Colonic mucosa (tissue), 4 donors: ENCODE measurements at regions of chr17 and their contacts with region 1.

Region 1: GRCh38 chr17:1730328-1731193 is 6.1 kb downstream of the WDR81 start:
- DNase-seq: peak; percentile 52
- H3K4me3 ChIP-seq: no peak overlapping the region
- H3K27ac ChIP-seq: peak overlapping the region; percentile 55
- H3K4me1 ChIP-seq: peaks cover under 1% of the 10 kb centered on the region
- H3K27me3 ChIP-seq: no peaks in the 10 kb centered on the region
- CTCF ChIP-seq: no peak

Region 2: GRCh38 chr17:1783834-1784611 is 53.5 kb after region 1 on chr17:
- intact Hi-C with region 1: loop called (anchors 5 kb)
- DNase-seq: peak; percentile 52
- H3K4me3 ChIP-seq: no peak overlapping the region
- H3K27ac ChIP-seq: peak overlapping the region; percentile 78
- H3K4me1 ChIP-seq: peaks cover 14% of the 10 kb centered on the region
- H3K27me3 ChIP-seq: no peaks in the 10 kb centered on the region
- CTCF ChIP-seq: peak; percentile 42